Heart right ventricle (tissue), 16 donors: ENCODE measurements at regions of chr21 and their contacts with region 1.

Region 1: DNA sequence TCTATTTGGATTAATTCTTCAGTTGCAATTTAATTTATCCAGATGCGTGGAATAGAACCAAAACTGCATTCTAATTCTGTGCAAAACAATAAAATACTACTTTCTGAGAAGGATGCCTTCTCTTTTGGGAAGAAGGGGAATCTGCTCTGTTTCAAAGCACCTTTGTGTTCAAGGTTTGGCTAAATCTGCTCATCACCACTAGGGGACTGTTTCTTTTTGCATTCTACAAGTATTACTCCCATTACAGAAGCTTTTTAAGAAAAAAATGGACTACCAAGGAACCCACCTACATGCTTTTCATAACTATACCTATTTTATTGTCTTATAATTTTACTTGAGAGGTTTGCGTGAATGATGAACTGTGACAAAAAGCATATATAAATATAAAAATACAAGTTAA is 18.2 kb downstream of the MRPS6 start:
- DNase-seq: no peak
- ATAC-seq: no peak
- H3K4me3 ChIP-seq: no peak overlapping the region
- H3K27ac ChIP-seq: no peak overlapping the region
- H3K4me1 ChIP-seq: peaks cover 0 to 48% (median 21%) of the 10 kb centered on the region in 9 donors
- H3K27me3 ChIP-seq: no peaks in the 10 kb centered on the region
- CTCF ChIP-seq: peak in 5 of 9 donors; percentile 11 to 32 (median 23)

Region 2: DNA sequence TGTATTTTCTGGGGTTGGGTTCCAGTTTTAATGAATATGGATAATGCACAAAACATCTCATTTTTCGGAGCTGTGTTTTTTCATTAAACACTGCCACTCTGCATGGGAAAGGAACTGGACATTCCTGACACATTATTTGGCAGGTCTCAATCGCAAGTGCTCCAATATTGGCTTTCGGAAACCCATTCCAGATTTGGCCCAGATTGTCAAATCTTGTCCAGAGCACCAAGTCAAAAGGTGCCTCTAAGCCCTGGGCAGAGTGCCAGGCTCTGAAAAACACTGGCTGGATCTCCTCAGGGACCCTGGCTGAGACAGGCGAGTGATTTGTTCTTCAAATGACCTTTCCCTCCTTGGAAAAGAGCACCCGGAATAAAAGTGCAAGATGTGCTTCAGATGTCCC is 86.6 kb before region 1 on chr21:
- intact Hi-C with region 1: loop called in 1 of 10 experiments (anchors 10 kb)
- DNase-seq: peak in 1 of 2 donors; percentile 33
- ATAC-seq: peak in 5 of 8 donors; percentile 9 to 70 (median 33)
- H3K4me3 ChIP-seq: no peak overlapping the region
- H3K27ac ChIP-seq: peak overlapping the region in 2 of 10 donors; percentile 0 to 5
- H3K4me1 ChIP-seq: peaks cover 0 to 13% (median 7%) of the 10 kb centered on the region in 9 donors
- H3K27me3 ChIP-seq: no peaks in the 10 kb centered on the region
- CTCF ChIP-seq: no peak

Region 3: GRCh38 chr21:34061983-34062382 is 29.6 kb before region 1 on chr21:
- intact Hi-C with region 1: no loop called
- DNase-seq: no peak
- ATAC-seq: no peak
- H3K4me3 ChIP-seq: no peak overlapping the region
- H3K27ac ChIP-seq: no peak overlapping the region
- H3K4me1 ChIP-seq: no peaks in the 10 kb centered on the region
- H3K27me3 ChIP-seq: no peaks in the 10 kb centered on the region
- CTCF ChIP-seq: no peak

Region 4: DNA sequence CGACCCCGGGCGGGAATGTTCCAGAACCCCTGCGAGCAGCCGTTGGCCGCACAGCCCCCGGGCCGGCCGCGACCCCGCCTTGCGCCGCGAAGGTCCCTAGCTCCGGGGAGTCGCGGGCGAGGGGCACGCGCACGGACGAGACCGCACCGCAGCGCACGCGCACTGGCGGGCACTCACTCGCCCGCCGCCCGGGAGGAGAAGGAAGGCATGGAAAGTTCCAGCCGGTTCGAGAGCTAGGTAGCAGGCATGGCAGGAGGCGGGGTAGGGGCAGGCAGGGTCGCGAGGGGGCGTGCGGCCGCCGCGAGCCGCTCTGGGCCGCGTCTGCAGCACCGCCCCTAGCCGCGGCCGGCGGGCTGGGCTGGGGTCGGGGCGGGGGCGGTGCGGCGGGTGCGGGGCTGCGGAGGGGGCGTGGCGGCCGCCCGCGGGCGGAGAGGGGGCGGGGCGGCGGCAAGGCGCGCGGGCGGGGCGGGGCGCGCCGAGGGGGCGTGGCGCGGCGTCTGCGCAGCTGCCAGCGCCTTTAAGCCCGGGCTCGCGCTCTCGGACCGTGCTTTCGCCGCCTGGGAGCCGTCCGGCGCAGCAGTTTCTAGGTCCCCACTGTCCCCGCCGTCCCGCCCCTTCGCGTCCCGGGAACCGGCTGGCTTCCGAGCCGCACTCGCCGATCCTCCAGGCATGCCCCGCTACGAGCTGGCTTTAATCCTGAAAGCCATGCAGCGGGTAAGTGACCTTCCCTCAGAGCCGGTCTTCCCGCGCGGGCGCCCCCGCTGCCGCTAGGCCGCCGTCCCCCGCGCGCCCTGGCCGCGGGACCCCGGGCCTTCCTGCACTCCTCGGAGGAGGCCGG is 18.4 kb before region 1 on chr21 and contains the starts of genes MRPS6 and SLC5A3:
- intact Hi-C with region 1: no loop called
- DNase-seq: peak; percentile 82 to 88
- ATAC-seq: peak; percentile 87 to 94 (median 92)
- H3K4me3 ChIP-seq: peak within 1 kb of the TSS; percentile 30 to 85 (median 79)
- H3K27ac ChIP-seq: peak within 1 kb of the TSS; percentile 46 to 92 (median 86)
- H3K4me1 ChIP-seq: peaks cover 0 to 48% (median 28%) of the 10 kb centered on the region in 9 donors
- H3K27me3 ChIP-seq: no peaks in the 10 kb centered on the region
- CTCF ChIP-seq: peak in 2 of 9 donors; percentile 9 to 10
- total RNA-seq, gene MRPS6: 32.0 to 68.1 (median 38.4) TPM
- total RNA-seq, gene SLC5A3: 1.8 to 7.4 (median 2.8) TPM

Region 5: GRCh38 chr21:34122047-34122446 is 30.4 kb after region 1 on chr21:
- intact Hi-C with region 1: loop called in 3 of 10 experiments (anchors 5 kb)
- DNase-seq: no peak
- ATAC-seq: no peak
- H3K4me3 ChIP-seq: no peak overlapping the region
- H3K27ac ChIP-seq: no peak overlapping the region
- H3K4me1 ChIP-seq: peaks cover 0 to 37% (median 11%) of the 10 kb centered on the region in 9 donors
- H3K27me3 ChIP-seq: no peaks in the 10 kb centered on the region
- CTCF ChIP-seq: no peak

Region 6: GRCh38 chr21:34129039-34129891 is 37.7 kb after region 1 on chr21:
- intact Hi-C with region 1: loop called in 4 of 10 experiments (anchors 2 to 5 kb)
- DNase-seq: peak; percentile 41 to 79
- ATAC-seq: peak; percentile 90 to 95 (median 92)
- H3K4me3 ChIP-seq: peak overlapping the region in 7 of 10 donors; percentile 2 to 34 (median 24)
- H3K27ac ChIP-seq: peak overlapping the region; percentile 34 to 82 (median 76)
- H3K4me1 ChIP-seq: peaks cover 3 to 70% (median 62%) of the 10 kb centered on the region in 9 donors
- H3K27me3 ChIP-seq: no peaks in the 10 kb centered on the region
- CTCF ChIP-seq: peak in 8 of 9 donors; percentile 8 to 63 (median 40)

Region 7: DNA sequence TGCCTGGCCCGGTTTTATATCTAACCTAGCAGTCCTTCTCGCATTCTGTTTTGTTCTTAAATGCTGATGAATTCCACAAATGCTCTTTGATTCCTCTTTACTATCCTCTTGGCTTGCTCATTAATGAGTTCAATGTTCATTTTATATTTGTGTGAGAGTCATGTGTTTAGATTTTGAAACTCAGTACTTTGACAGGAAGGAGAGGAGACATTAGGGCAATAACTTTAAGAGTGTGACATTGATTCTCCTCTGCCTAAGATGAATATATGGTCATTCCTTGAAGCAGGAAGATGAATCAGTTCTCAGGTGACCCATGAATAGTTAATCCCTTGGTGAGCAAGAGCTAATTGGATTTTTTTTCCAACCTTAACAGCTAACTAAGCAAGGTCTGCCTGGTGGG is 65.9 kb after region 1 on chr21:
- intact Hi-C with region 1: loop called in 1 of 10 experiments (anchors 10 kb)
- DNase-seq: no peak
- ATAC-seq: no peak
- H3K4me3 ChIP-seq: no peak overlapping the region
- H3K27ac ChIP-seq: no peak overlapping the region
- H3K4me1 ChIP-seq: peaks cover 0 to 15% (median 0%) of the 10 kb centered on the region in 9 donors
- H3K27me3 ChIP-seq: no peaks in the 10 kb centered on the region
- CTCF ChIP-seq: no peak